Transverse colon (tissue), 4 donors: ENCODE measurements at regions of chr12 and their contacts with region 1.

Region 1: DNA sequence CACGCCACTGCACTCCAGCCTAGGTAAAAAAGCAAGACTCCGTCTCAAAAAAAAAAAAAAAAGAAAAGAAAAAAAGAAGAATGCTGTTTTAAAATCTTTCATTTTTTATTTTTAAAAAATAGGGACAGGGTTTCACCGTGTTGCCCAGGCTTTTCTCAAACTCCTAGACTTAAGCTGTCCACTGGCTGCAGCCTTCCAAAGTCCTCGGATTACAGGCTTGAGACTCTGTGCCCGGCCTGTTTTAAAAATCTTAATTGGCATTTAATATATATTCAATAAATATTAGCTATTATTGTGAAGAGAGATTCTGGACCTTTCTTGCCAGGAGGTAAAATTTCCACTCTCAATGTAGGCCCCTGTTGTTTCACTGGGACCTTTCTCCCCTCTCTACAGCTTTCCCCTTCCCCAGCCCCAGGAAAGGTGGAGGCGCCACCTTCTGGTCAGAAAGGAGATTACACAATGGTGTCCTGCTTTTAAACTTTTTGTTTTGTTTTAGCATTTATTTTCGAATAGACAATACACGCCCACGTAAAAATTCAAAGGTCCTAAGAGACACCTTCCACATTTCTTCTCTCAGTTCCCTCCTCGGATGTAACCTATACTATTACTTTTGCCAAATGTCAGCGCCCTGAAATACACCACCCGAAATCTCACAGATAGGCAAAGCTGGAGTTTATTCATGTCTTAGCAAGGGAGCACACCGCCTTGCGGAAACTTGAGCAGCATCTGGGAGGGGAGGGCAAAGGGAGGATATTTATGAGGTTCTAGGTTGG is 23.8 kb upstream of the PHC1 start:
- DNase-seq: peak; percentile 49
- H3K4me3 ChIP-seq: peak overlapping the region; percentile 1 to 52 (median 31)
- H3K27ac ChIP-seq: peak overlapping the region in 1 of 4 donors; percentile 40
- H3K4me1 ChIP-seq: peaks cover 0 to 4% (median 0%) of the 10 kb centered on the region in 4 donors
- H3K27me3 ChIP-seq: no peaks in the 10 kb centered on the region
- CTCF ChIP-seq: peak; percentile 72 to 89 (median 85)
- EP300 ChIP-seq: no peak
- POLR2A ChIP-seq: no peak

Region 2: GRCh38 chr12:8681041-8681902 is 209.2 kb before region 1 on chr12:
- in situ Hi-C with region 1: loop called in 3 of 4 experiments (anchors 10 to 25 kb)
- intact Hi-C with region 1: loop called (anchors 5 kb)
- DNase-seq: no peak
- H3K4me3 ChIP-seq: no peak overlapping the region
- H3K27ac ChIP-seq: no peak overlapping the region
- H3K4me1 ChIP-seq: peaks cover 0 to 2% (median 0%) of the 10 kb centered on the region in 4 donors
- H3K27me3 ChIP-seq: no peaks in the 10 kb centered on the region
- CTCF ChIP-seq: no peak
- EP300 ChIP-seq: no peak
- POLR2A ChIP-seq: no peak

Region 3: DNA sequence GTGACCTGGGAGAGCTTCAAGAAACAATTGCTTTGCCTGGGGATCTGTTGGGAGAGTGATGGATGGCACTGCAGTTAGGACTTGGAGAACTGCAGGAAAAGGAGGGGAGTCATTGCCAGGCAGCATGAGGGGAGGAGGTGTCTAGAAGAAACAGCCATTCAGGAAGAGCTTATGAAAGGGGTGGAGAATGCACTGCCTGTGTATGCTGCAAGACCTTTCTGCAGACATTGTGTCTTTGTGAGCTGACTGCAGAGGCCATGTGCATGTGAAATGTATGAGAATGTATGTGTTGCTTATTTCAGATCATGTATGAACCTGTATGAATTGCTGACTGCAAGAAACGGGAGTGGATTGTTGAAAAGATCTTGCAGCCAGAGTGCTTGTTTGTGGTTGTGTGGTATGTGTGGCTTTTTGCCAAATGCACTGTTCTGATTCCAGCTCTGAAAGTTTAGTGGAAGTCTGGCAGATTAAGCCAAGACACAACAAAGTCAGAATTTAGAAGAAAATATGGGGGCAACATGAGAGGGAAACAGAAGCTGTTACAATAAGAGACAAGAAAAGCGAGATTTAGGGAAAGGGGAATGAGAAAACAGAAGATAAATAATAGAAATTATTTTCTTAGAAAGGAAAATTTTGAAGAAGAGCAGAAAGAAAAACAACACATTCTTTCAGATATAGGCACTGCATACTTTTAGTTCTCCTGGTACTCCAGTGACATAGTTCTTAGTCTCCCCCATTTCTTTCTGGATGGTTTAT is 202.5 kb before region 1 on chr12:
- in situ Hi-C with region 1: loop called in 3 of 4 experiments (anchors 10 to 25 kb)
- intact Hi-C with region 1: loop called (anchors 5 kb)
- DNase-seq: peak; percentile 29
- H3K4me3 ChIP-seq: no peak overlapping the region
- H3K27ac ChIP-seq: peak overlapping the region; percentile 54 to 82 (median 68)
- H3K4me1 ChIP-seq: peaks cover 3 to 25% (median 8%) of the 10 kb centered on the region in 4 donors
- H3K27me3 ChIP-seq: no peaks in the 10 kb centered on the region
- CTCF ChIP-seq: no peak
- EP300 ChIP-seq: peak; percentile 33
- POLR2A ChIP-seq: no peak

Region 4: GRCh38 chr12:8828540-8829518 is 61.7 kb before region 1 on chr12:
- in situ Hi-C with region 1: no loop called
- intact Hi-C with region 1: no loop called
- DNase-seq: no peak
- H3K4me3 ChIP-seq: no peak overlapping the region
- H3K27ac ChIP-seq: no peak overlapping the region
- H3K4me1 ChIP-seq: no peaks in the 10 kb centered on the region
- H3K27me3 ChIP-seq: no peaks in the 10 kb centered on the region
- CTCF ChIP-seq: no peak
- EP300 ChIP-seq: no peak
- POLR2A ChIP-seq: no peak

Region 5: DNA sequence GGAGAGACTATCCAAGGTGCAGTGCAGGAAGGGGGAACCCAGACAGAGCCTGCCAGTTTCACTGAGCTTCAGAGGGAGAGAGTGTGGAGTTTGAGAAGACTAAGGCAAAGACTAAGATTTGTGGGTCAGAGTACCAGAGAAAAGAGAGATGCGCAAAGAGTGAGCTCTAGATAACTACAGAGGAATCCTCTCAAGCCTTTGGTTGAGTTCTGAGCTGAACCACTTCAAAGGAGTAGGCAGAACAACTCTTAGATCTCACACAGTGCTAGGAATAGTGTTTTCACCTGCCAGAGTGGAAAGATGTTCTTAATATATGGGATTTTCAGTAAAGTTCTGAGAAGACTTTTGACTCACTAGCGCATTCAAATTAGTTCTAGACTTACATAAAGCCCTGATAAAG is 69.7 kb after region 1 on chr12:
- in situ Hi-C with region 1: no loop called
- intact Hi-C with region 1: no loop called
- DNase-seq: no peak
- H3K4me3 ChIP-seq: no peak overlapping the region
- H3K27ac ChIP-seq: no peak overlapping the region
- H3K4me1 ChIP-seq: no peaks in the 10 kb centered on the region
- H3K27me3 ChIP-seq: no peaks in the 10 kb centered on the region
- CTCF ChIP-seq: no peak
- EP300 ChIP-seq: no peak
- POLR2A ChIP-seq: no peak

Region 6: GRCh38 chr12:9271875-9272274 is 381.4 kb after region 1 on chr12:
- in situ Hi-C with region 1: no loop called
- intact Hi-C with region 1: no loop called
- DNase-seq: no peak
- H3K4me3 ChIP-seq: no peak overlapping the region
- H3K27ac ChIP-seq: no peak overlapping the region
- H3K4me1 ChIP-seq: no peaks in the 10 kb centered on the region
- H3K27me3 ChIP-seq: no peaks in the 10 kb centered on the region
- CTCF ChIP-seq: no peak
- EP300 ChIP-seq: no peak
- POLR2A ChIP-seq: no peak